BJ (cell line): ENCODE measurements at regions of chr13 and their contacts with region 1.

Region 1: DNA sequence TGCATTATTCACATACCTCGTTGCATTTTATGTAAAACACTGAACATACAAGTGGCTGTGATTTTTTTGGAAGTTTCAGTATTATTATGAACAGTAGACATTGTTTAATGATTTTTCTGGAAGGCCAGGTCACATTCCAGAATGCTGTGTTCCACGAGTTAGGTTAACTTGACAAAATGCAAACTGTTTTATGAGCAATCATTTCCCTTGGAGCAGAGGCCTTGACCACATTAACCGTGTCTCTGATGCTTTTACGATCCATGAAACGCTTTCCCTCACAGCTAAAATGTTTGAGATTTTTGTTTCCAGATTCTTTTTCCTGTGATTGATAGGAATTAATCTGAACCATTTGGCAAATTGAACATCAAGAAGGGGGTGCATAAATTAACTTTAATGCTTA is 57.8 kb downstream of the MBNL2 start:
- DNase-seq: peak; percentile 66
- H3K4me3 ChIP-seq: no peak overlapping the region
- H3K27me3 ChIP-seq: no peaks in the 10 kb centered on the region
- CTCF ChIP-seq: no peak

Region 2: DNA sequence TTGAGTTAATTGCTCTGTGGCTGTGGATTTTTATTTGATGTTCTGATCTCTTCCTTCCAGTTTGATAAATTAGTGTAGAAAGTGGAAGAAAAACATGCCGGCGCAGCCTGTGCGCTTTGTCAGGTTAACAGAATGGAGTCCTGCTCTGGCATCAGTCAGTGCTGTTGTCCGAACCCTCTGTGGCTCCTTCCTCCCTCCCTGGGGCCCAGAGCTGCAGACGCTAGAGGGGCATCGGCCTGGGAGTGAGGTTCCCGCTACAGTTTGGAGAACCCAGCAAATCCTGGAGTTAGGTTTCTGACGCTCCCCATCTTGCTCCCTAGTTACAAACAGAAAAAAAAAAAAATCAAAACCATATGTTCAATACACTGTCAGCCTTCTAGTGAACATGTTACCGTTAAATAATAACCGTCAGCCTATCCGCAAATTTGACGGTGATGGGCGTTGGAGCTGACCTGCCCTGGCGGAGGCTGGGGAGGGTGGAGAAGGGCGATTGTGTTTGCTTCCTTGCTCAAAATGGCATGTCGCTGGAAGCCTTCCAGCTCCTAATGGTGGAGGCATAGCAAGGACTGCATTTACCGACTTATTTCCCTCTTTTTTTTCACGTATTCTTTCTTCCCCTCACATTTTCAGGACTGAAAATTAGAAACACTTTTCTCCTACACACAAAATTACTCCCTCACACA is 44.2 kb before region 1 on chr13:
- CTCF ChIA-PET with region 1: interaction called, 3 read pairs
- POLR2A ChIA-PET with region 1: interaction called, 14 read pairs
- DNase-seq: no peak
- H3K4me3 ChIP-seq: no peak overlapping the region
- H3K27me3 ChIP-seq: no peaks in the 10 kb centered on the region
- CTCF ChIP-seq: no peak